HEK293T (cell line): ENCODE measurements at regions of chr10 and their contacts with region 1.

Region 1: GRCh38 chr10:97278491-97278989 is 13.9 kb downstream of the ARHGAP19 start:
- DNase-seq: peak; percentile 59

Region 2: DNA sequence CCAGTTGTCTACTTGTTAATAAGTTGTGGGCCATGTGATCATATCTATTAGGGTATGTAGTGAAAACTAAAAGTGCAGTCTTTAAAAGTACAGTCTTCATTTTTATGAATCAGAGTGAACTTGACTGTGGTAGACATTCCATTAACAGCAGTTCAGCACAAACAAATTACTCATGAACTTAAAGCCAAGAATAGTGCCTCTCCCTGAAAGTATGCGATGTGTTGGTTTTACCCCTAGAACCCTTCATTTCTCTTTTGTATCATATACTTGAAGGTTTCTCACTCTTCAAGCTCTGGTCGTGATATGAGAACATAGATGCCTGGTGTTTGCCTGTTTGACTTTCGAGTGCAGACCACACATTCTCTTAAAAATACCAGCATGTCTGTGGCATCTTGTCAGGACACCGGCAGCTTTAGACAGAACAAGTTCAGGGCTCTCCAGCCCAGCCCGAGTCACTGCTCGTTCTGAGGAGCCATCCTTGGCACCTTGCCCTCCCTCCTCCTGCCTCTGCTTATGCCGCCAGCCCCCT is 287.2 kb before region 1 on chr10:
- CTCF ChIA-PET with region 1: no interaction called
- POLR2A ChIA-PET with region 1: no interaction called
- DNase-seq: no peak

Region 3: GRCh38 chr10:97267671-97268070 is 10.9 kb before region 1 on chr10:
- CTCF ChIA-PET with region 1: interaction called, 12 read pairs
- POLR2A ChIA-PET with region 1: no interaction called
- DNase-seq: no peak

Region 4: GRCh38 chr10:97292097-97292862 is 13.7 kb after region 1 on chr10 and contains the start of gene ARHGAP19:
- CTCF ChIA-PET with region 1: interaction called, 17 read pairs
- POLR2A ChIA-PET with region 1: interaction called, 11 read pairs
- DNase-seq: peak; percentile 96